ENCODE measurements at regions of chr11 and their contacts with region 1.

Region 1: DNA sequence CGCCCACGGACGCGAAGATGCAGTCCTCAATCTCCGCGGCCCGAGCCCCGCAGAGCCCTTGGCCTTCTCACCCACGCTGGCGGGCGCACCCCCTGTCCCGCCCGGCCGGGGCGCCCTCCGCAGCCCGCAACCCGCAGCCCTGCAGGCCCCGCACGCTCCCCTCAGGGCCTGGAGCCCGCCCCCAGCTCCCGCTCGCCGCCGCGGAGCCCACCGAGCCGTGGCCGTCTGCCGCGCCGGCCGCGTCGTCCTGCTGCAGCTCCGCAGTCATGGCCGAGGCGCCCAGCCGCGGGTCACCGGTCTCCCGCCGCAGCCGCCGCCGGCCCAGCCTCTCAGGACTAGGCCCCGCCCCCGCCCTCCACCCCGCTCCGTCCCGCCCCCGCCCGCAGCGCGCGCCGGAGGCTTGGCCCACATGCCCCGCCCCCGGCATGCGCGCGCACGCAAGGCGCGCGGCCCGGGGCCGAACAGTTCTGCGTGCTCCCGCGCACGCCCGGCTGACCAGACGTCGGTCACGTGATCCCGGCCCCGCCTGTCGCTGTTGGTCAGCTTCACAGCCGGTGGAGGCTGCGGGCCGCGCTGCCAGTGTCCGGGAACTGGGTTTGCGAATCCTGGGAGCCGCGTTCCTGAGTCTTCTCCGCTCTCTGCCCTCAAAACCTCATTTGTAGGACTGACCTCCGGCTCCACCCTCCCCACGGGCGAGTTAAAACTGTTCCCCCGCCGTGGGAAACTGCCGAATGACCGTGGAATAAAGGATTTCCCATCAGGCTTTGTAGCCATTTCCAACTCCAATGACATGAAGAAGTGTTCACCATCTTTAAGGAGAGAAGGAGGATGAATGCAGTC is at the start of gene USP28:
- DNase-seq: peak; percentile 89
- ATAC-seq: peak; percentile 80
- H3K4me3 Mint-ChIP-seq: peak within 1 kb of the TSS; percentile 90
- H3K27ac Mint-ChIP-seq: peak within 1 kb of the TSS; percentile 92
- H3K4me1 Mint-ChIP-seq: peaks cover 45% of the 10 kb centered on the region
- H3K27me3 Mint-ChIP-seq: no peaks in the 10 kb centered on the region
- total RNA-seq, gene USP28: 38.6 to 43.9 TPM

Region 2: DNA sequence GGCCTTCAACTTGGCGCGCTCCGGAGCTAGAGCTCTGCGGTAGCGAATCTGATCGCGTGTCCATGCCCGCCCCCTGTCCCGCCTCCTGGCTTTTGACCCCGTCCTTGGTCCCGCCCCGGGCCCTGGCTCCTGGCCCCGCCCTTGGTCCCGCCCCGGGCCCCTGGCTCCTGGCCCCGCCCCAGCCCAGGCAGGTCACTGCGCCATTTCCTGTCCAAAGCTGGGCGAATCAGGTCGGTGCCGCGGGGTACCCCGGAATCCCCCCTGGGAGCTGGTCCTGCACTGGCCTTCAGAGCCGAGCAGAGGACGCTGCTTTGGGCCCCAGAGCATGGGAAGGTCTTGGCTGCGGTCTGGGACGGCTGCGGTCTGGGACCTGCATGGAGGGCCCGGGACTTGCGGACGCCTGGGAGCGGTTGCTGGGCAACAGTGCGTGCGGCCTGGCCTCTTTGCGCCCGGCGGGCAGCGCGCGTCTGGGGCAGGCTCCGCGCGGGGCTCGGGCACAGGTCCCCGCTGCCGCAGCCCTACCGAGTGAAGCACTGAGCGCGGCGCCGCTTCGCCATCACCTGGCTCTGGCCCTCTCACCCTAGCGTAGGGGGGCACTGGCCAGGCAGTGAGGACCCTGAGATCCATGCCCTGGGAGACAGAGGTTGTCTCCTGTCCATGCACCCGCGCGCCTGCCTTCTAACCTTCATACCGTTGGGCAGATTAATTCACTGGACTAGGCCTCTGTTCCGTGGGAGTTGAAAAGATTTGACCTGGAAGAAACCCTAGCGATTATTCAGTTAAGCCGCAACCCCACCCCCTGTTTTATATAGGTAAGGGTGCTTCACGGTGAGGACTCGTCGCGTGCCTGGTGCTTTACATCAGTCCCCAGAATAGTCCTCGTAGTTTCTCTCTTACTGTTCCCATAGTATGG is 560.8 kb before region 1 on chr11 and contains the start of gene TTC12:
- CTCF ChIA-PET with region 1: no interaction called
- POLR2A ChIA-PET with region 1: no interaction called
- intact Hi-C with region 1: loop called (anchors 1 to 10 kb)
- DNase-seq: peak; percentile 97
- ATAC-seq: peak; percentile 99
- H3K4me3 Mint-ChIP-seq: peak within 1 kb of the TSS; percentile 77
- H3K27ac Mint-ChIP-seq: peak within 1 kb of the TSS; percentile 82
- H3K4me1 Mint-ChIP-seq: peaks cover 24% of the 10 kb centered on the region
- H3K27me3 Mint-ChIP-seq: no peaks in the 10 kb centered on the region
- total RNA-seq, gene TTC12: 16.3 to 17.6 TPM

Region 3: DNA sequence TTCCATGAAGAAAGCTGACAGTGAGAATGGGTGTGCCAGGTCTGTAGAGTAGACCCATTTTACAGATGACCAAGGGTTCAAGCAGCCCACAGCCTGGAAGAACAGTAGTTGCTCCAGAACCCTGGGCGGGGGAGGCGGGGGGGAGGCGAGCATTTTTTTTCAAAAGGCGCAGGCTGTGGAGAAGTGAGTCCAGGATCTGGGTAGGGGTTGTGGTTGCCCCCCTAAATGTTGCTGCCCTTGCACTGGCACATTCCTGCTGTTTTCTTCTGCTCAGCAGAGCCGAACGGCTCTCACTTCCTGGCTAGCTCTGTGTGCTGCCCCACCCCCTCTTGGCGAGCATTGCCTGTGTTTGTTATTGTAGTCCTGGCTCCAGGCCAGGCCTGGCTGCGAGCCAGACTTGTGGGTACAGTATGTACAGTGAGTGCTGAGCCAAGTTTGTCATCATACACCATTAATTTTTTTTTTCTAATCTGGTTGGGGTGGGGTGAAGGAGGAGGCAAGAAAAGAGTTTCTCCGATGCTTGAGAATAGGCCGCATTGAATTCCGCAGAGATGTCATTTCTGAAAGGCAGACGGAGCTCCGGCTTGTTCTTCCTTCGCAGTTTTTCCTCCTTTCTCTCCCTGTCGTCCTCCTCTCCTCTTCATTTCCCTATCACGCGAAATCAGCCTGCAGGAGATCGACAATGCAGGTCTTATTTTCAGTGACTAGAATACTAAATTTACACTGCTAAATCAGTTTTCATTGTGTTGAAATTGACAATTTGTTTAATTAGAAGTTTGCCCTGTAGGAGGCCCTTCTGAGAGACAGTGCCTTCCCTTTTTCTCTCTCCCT is 284.6 kb after region 1 on chr11:
- CTCF ChIA-PET with region 1: no interaction called
- POLR2A ChIA-PET with region 1: no interaction called
- intact Hi-C with region 1: loop called in 1 of 2 experiments (anchors 5 kb)
- DNase-seq: peak; percentile 93
- ATAC-seq: peak; percentile 83
- H3K4me3 Mint-ChIP-seq: peak overlapping the region; percentile 49
- H3K27ac Mint-ChIP-seq: peak overlapping the region; percentile 76
- H3K4me1 Mint-ChIP-seq: peaks cover 70% of the 10 kb centered on the region
- H3K27me3 Mint-ChIP-seq: no peaks in the 10 kb centered on the region

Region 4: GRCh38 chr11:114400217-114400914 is 524.9 kb after region 1 on chr11 and contains the starts of genes C11orf71 and RBM7:
- CTCF ChIA-PET with region 1: no interaction called
- POLR2A ChIA-PET with region 1: no interaction called
- intact Hi-C with region 1: loop called (anchors 1 to 10 kb)
- DNase-seq: peak; percentile 99
- ATAC-seq: peak; percentile 95
- H3K4me3 Mint-ChIP-seq: peak within 1 kb of the TSS; percentile 98
- H3K27ac Mint-ChIP-seq: peak within 1 kb of the TSS; percentile 99
- H3K4me1 Mint-ChIP-seq: peaks cover 49% of the 10 kb centered on the region
- H3K27me3 Mint-ChIP-seq: no peaks in the 10 kb centered on the region
- total RNA-seq, gene C11orf71: 4.8 to 5.5 TPM
- total RNA-seq, gene RBM7: 46.7 to 72.3 TPM

Region 5: GRCh38 chr11:115428306-115428705 is 1552.9 kb after region 1 on chr11:
- CTCF ChIA-PET with region 1: no interaction called
- POLR2A ChIA-PET with region 1: no interaction called
- intact Hi-C with region 1: no loop called
- DNase-seq: no peak
- ATAC-seq: no peak
- H3K4me3 Mint-ChIP-seq: no peak overlapping the region
- H3K27ac Mint-ChIP-seq: no peak overlapping the region
- H3K4me1 Mint-ChIP-seq: no peaks in the 10 kb centered on the region
- H3K27me3 Mint-ChIP-seq: no peaks in the 10 kb centered on the region

Region 6: GRCh38 chr11:115504276-115505158 is 1629.1 kb after region 1 on chr11 and contains the start of gene CADM1:
- CTCF ChIA-PET with region 1: no interaction called
- POLR2A ChIA-PET with region 1: no interaction called
- intact Hi-C with region 1: loop called in 1 of 2 experiments (anchors 10 kb)
- DNase-seq: peak; percentile 87
- ATAC-seq: peak; percentile 91
- H3K4me3 Mint-ChIP-seq: peak within 1 kb of the TSS; percentile 64
- H3K27ac Mint-ChIP-seq: no peak within 1 kb of the TSS
- H3K4me1 Mint-ChIP-seq: peaks cover 10% of the 10 kb centered on the region
- H3K27me3 Mint-ChIP-seq: peaks cover 28% of the 10 kb centered on the region
- total RNA-seq, gene CADM1: 0.58 to 0.91 TPM